ENCODE measurements at regions of chr16 and their contacts with region 1.

Region 1: DNA sequence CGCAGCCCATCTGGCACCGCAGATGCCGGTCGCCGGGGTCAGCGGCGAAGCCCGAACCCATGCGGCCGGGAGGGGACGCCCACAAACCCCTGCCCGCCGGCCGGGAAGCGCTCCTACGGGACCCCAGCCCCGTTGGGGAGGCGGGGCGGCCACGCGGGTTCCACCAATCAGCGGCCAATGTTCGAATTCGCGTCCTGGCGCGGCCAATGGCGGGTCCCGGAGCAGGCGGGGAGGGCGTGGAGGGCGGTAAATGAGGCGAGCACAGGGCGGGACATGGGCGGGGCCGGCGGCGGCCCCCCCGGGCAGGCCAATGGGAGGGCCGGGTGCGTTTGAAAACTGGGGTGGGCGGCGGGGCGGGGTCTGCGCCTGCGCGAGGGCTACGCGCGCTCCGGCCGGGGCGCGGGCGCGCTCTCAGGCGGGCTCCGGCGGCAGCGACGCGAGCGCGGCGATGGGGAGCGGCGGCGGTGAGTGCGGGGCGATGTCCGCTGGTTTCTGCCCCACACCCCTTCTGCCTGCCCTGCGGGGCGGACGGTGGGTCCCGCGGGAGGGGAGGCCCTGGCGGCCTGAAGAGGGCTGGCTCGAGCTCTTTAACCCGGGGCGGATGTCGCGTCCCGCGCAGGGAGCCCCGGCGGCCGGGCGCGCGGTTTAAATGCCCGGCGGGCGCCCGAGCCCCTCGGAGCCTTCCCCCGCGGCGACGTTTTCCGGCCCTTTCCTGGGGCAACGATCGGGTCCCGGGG is at the start of gene CCNF:
- DNase-seq: peak; percentile 97
- H3K4me3 ChIP-seq: peak within 1 kb of the TSS; percentile 87
- H3K27ac ChIP-seq: peak within 1 kb of the TSS; percentile 60
- H3K4me1 ChIP-seq: peaks cover 26% of the 10 kb centered on the region
- CTCF ChIP-seq: 0 out of 2 replicates have a peak, but pooled peaks have one; percentile 5
- total RNA-seq, gene CCNF: 71.5 and 82.1 TPM in 2 replicates

Region 2: GRCh38 chr16:2155091-2156021 is 273.8 kb before region 1 on chr16 and contains the start of gene TRAF7:
- CTCF ChIA-PET with region 1: no interaction called
- POLR2A ChIA-PET with region 1: no interaction called
- intact Hi-C with region 1: loop called (anchors 10 kb)
- DNase-seq: peak; percentile 100
- H3K4me3 ChIP-seq: peak within 1 kb of the TSS; percentile 100
- H3K27ac ChIP-seq: peak within 1 kb of the TSS; percentile 83
- H3K4me1 ChIP-seq: peaks cover 39% of the 10 kb centered on the region
- CTCF ChIP-seq: no peak
- total RNA-seq, gene TRAF7: 50.1 and 53.6 TPM in 2 replicates

Region 3: GRCh38 chr16:2194852-2195321 is 234.3 kb before region 1 on chr16:
- CTCF ChIA-PET with region 1: no interaction called
- POLR2A ChIA-PET with region 1: no interaction called
- intact Hi-C with region 1: no loop called
- DNase-seq: peak; percentile 68
- H3K4me3 ChIP-seq: no peak overlapping the region
- H3K27ac ChIP-seq: no peak overlapping the region
- H3K4me1 ChIP-seq: no peaks in the 10 kb centered on the region
- CTCF ChIP-seq: peak; percentile 70

Region 4: GRCh38 chr16:2450535-2450934 is 21.3 kb after region 1 on chr16:
- CTCF ChIA-PET with region 1: no interaction called
- POLR2A ChIA-PET with region 1: no interaction called
- intact Hi-C with region 1: no loop called
- DNase-seq: no peak
- H3K4me3 ChIP-seq: no peak overlapping the region
- H3K27ac ChIP-seq: no peak overlapping the region
- H3K4me1 ChIP-seq: no peaks in the 10 kb centered on the region
- CTCF ChIP-seq: no peak

Region 5: GRCh38 chr16:2467521-2468151 is 38.4 kb after region 1 on chr16:
- CTCF ChIA-PET with region 1: no interaction called
- POLR2A ChIA-PET with region 1: interaction called, 3 read pairs
- intact Hi-C with region 1: loop called (anchors 5 kb)
- DNase-seq: peak; percentile 79
- H3K4me3 ChIP-seq: peak overlapping the region; percentile 64
- H3K27ac ChIP-seq: peak overlapping the region; percentile 89
- H3K4me1 ChIP-seq: peaks cover 68% of the 10 kb centered on the region
- CTCF ChIP-seq: peak; percentile 50

Region 6: GRCh38 chr16:2500918-2501750 is 71.9 kb after region 1 on chr16:
- CTCF ChIA-PET with region 1: no interaction called
- POLR2A ChIA-PET with region 1: no interaction called
- intact Hi-C with region 1: loop called (anchors 1 kb)
- DNase-seq: peak; percentile 83
- H3K4me3 ChIP-seq: no peak overlapping the region
- H3K27ac ChIP-seq: no peak overlapping the region
- H3K4me1 ChIP-seq: peaks cover 10% of the 10 kb centered on the region
- CTCF ChIP-seq: peak; percentile 98